ENCODE measurements at regions of chr11 and their contacts with region 1.

Region 1: DNA sequence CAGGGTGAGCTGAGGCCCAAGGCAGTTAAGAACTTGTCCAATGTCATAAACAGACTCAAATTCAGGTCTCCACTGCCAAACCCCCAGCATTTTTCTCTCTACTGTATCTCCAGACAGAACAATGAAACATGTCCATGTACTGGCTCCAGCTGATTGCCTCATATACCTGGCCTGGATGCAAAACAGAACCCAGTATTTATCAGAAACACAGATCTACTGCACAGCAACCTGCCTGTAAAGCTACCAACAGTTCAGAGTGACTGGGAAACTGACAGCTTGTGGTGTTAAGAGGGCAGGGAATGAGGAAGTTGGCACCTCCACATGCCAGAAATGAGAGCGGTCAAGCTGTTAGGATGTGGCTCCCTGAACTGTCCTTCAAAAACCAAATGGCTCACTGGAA is 41.6 kb downstream of the C11orf71 start:
- DNase-seq: no peak
- H3K4me3 ChIP-seq: no peak overlapping the region
- H3K27ac ChIP-seq: peak overlapping the region in 1 of 2 experiments; percentile 48; a peak in 1 of 4 replicates
- H3K4me1 ChIP-seq: peaks cover 0 to 3% of the 10 kb centered on the region in 2 experiments; a peak in 2 of 4 replicates
- H3K27me3 ChIP-seq: no peaks in the 10 kb centered on the region
- CTCF ChIP-seq: no peak
- EP300 ChIP-seq: no peak
- RAD21 ChIP-seq: no peak

Region 2: DNA sequence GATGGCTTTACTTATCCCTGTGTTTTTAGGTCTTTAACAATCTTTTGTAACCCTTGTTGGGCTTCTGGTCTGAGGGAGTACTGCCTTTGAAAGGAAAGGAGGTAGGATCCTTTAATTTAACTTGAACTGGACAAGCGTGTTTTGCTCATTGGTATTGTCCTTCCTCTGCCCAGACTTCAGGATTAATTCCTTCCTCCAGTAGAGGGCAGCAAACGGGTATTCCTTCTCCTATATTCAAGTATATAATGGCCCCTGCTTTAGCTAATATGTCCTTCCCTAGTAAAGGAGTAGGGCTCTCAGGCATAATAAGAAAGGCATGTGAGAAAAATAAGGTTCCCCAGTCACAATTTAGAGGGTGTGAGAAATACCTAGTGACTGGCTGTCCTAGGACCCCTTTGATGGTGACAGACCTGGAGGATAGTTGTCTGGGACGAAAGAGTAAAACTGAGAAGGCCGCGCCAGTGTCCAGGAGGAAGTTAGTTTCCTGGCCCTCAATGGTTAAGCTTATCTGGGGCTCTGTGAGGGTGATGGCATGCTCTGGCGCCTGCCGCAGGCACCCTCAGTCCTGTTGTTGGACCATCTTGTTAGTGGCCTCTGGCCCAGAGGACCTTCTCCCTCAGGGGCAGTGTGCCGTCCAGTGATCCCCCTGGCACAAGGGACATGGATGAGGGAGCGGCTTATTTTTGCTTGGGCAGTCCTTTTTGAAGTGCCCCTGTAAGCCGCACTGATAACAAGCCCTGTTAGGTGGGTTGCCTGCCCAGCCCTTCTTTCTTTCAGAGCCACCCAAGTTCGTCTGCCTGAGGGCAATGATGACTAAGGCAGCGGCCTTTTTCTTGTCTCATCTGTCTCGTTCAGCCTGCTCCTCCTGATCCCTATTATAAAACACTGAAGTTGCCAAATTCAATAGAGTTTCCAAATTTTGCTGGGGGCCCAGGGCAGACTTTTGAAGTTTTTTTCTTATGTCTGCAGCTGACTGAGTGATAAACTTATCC is 10.2 kb before region 1 on chr11:
- CTCF ChIA-PET with region 1: interaction called, 10 read pairs
- POLR2A ChIA-PET with region 1: no interaction called
- DNase-seq: peak; percentile 15
- H3K4me3 ChIP-seq: no peak overlapping the region
- H3K27ac ChIP-seq: no peak overlapping the region
- H3K4me1 ChIP-seq: no peaks in the 10 kb centered on the region
- H3K27me3 ChIP-seq: no peaks in the 10 kb centered on the region
- CTCF ChIP-seq: peak; percentile 68
- EP300 ChIP-seq: no peak
- RAD21 ChIP-seq: peak; percentile 70

Region 3: GRCh38 chr11:114377612-114378267 is 19.0 kb after region 1 on chr11:
- CTCF ChIA-PET with region 1: no interaction called
- POLR2A ChIA-PET with region 1: no interaction called
- DNase-seq: no peak
- H3K4me3 ChIP-seq: no peak overlapping the region
- H3K27ac ChIP-seq: peak overlapping the region; percentile 11 to 89; a peak in 3 of 4 replicates
- H3K4me1 ChIP-seq: peaks cover 9% of the 10 kb centered on the region in 2 experiments
- H3K27me3 ChIP-seq: no peaks in the 10 kb centered on the region
- CTCF ChIP-seq: no peak
- EP300 ChIP-seq: no peak; a peak in 1 of 4 replicates
- RAD21 ChIP-seq: no peak

Region 4: GRCh38 chr11:114571712-114572111 is 213.0 kb after region 1 on chr11:
- CTCF ChIA-PET with region 1: no interaction called
- POLR2A ChIA-PET with region 1: no interaction called
- DNase-seq: no peak
- H3K4me3 ChIP-seq: no peak overlapping the region
- H3K27ac ChIP-seq: no peak overlapping the region
- H3K4me1 ChIP-seq: no peaks in the 10 kb centered on the region
- H3K27me3 ChIP-seq: no peaks in the 10 kb centered on the region
- CTCF ChIP-seq: no peak
- EP300 ChIP-seq: no peak
- RAD21 ChIP-seq: no peak

Measured in SK-N-SH (cell line).